Common myeloid progenitor, CD34-positive (primary cell): ENCODE measurements at regions of chr7 and their contacts with region 1.

Region 1: DNA sequence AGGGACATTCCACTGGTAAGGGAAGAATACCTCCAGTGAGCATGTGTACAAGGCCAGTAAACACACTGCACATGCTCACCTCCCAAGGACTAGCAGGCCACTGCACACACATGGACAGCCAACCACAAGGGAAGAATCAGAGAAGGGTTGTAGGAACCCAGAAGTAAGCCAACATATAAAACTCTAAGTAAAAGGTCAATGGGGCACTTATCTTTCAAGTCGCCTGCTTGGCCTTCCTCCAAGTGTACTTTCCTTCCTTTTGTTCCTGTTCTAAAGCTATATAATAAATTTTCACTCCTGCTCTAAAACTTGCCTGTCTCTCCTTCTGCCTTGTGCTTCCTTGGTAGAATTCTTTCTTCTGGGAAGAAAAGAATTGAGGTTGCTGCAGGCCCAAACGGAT is 33.0 kb downstream of the ORC5 start:
- DNase-seq: peak in 2 of 3 donors; percentile 22 to 35
- H3K4me3 ChIP-seq: no peak overlapping the region
- H3K27ac ChIP-seq: no peak overlapping the region
- H3K4me1 ChIP-seq: peaks cover 0 to 10% (median 6%) of the 10 kb centered on the region in 4 experiments
- H3K27me3 ChIP-seq: no peaks in the 10 kb centered on the region

Region 2: DNA sequence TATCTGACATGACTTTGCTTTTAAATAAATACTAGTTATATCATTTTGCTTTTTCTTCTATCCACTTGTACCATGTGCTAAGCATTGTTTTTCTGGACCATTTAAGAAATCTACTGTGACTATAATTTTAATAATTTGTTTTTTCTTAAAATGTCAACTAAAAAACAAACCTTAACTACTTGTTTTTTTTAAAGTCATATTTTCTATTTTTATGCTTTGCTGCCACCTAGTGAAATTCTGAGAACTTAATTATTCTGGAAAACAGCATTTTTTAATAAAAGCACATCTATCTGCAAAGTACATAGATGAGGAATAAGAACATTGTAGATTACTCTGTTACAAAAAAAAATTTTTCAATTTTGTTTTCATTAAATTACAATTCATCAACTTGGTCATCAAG is 14.4 kb before region 1 on chr7:
- CTCF ChIA-PET with region 1: interaction called, 15 read pairs
- POLR2A ChIA-PET with region 1: no interaction called
- DNase-seq: peak; percentile 31 to 64 (median 60)
- H3K4me3 ChIP-seq: no peak overlapping the region
- H3K27ac ChIP-seq: no peak overlapping the region
- H3K4me1 ChIP-seq: no peaks in the 10 kb centered on the region
- H3K27me3 ChIP-seq: no peaks in the 10 kb centered on the region